ENCODE measurements at regions of chr9 and their contacts with region 1.

Region 1: DNA sequence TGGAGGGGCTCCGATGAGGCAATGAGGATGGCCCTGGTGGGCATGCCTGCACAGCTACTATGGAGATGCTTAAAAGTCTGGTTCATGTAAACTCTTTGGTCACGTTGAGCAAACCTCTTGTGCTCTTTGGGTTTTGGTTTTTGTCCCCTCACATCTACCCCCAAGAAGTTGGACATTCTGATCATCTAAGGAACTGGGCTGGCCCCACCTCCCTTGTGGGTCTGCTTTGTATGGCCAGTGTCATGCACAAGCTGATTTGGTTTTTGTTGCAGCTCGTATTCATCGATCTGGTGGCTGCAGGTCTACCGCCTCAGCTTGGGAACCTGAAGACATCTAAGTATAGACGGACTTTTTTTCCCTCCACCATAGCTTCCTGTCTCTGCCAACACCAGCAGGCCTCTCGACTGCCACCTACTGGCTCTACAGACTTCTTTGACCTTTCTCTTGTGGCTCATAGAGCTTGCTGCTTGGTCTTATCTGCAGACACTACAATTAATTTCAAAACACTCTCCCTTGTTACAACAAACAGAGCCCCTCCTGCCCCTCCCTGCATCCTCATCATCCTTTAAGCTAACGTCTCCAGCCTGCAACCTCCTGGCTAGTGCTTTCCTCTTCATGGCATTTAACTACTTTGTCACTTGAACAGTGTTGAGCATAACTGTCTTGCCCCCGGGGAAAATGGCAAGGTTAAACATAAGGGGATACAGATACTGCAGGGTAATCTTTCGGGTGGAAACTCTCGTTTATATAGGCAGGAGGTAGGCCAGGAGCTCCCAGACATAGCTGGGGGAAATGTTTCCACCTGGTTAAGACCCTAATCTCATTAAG is 34.5 kb downstream of the TSTD2 start:
- DNase-seq: peak; percentile 64
- H3K4me3 Mint-ChIP-seq: no peak overlapping the region
- H3K27ac Mint-ChIP-seq: no peak overlapping the region
- H3K4me1 Mint-ChIP-seq: peaks cover 3% of the 10 kb centered on the region
- H3K27me3 Mint-ChIP-seq: peaks cover 3% of the 10 kb centered on the region

Region 2: GRCh38 chr9:97386733-97387503 is 211.8 kb before region 1 on chr9:
- intact Hi-C with region 1: loop called (anchors 1 kb)
- DNase-seq: peak; percentile 56
- H3K4me3 Mint-ChIP-seq: no peak overlapping the region
- H3K27ac Mint-ChIP-seq: no peak overlapping the region
- H3K4me1 Mint-ChIP-seq: peaks cover 13% of the 10 kb centered on the region
- H3K27me3 Mint-ChIP-seq: peaks cover 21% of the 10 kb centered on the region

Region 3: DNA sequence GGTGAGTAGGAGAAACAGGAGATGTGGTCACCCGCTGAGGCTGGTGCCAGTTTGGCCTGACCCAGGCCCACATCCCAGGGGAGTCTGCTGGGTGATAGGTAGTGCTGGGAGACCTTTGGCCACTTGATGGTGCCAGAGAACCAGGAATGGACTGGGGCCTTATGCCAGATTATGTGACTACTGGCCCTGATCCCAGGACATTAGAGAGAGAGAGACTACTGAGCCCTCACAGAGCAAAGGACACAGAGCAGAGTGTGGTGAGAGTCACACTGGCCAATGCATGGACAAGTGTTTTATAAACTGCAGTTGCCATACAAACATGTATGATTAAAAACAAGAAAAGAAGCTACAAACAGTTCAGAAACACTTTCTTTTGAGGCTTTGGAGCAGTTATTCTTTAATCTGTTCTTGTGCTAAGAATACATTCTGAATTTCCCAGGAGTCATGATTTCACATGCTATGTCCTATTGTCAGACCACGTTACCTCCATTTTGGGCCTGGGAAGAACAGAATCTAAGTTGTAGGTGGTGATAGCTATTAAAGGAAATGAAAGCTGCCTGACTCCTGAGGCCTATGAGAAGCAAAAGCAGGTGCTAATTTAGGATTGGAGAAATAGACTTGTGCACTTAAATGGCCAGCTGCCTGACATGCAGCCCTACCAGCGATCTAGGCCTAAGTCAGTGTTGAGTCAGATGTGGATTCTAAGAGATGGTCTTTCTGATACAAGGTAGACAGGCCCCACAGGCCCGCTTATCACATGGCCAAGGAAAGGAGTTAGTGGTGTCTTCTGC is 129.8 kb before region 1 on chr9:
- intact Hi-C with region 1: loop called (anchors 1 kb)
- DNase-seq: peak; percentile 14
- H3K4me3 Mint-ChIP-seq: no peak overlapping the region
- H3K27ac Mint-ChIP-seq: no peak overlapping the region
- H3K4me1 Mint-ChIP-seq: no peaks in the 10 kb centered on the region
- H3K27me3 Mint-ChIP-seq: no peaks in the 10 kb centered on the region

Measured in activated T-helper 2 cell treated with anti-CD3 and anti-CD28 coated beads, Interferon-gamma antibody, Interleukin-2, Interleukin-4, amounts not matched to agents 10 μg/mL and 5 μg/mL and 100 μg/mL, durations not matched to agents 14 hours and 24 hours and 36 hours (primary cell).